PC-9 (cell line): ENCODE measurements at regions of chr17 and their contacts with region 1.

Region 1: GRCh38 chr17:35242805-35243560 is at the start of gene SLFN5:
- DNase-seq: peak; percentile 73 to 90
- H3K4me3 ChIP-seq: peak within 1 kb of the TSS; percentile 86
- H3K27ac ChIP-seq: peak within 1 kb of the TSS; percentile 99
- H3K4me1 ChIP-seq: peaks cover 29% of the 10 kb centered on the region
- H3K27me3 ChIP-seq: peaks cover 1% of the 10 kb centered on the region; the same call in 1 of the 2 replicates
- CTCF ChIP-seq: no peak
- total RNA-seq, gene SLFN5: 16.1 and 17.3 TPM in 2 replicates

Region 2: DNA sequence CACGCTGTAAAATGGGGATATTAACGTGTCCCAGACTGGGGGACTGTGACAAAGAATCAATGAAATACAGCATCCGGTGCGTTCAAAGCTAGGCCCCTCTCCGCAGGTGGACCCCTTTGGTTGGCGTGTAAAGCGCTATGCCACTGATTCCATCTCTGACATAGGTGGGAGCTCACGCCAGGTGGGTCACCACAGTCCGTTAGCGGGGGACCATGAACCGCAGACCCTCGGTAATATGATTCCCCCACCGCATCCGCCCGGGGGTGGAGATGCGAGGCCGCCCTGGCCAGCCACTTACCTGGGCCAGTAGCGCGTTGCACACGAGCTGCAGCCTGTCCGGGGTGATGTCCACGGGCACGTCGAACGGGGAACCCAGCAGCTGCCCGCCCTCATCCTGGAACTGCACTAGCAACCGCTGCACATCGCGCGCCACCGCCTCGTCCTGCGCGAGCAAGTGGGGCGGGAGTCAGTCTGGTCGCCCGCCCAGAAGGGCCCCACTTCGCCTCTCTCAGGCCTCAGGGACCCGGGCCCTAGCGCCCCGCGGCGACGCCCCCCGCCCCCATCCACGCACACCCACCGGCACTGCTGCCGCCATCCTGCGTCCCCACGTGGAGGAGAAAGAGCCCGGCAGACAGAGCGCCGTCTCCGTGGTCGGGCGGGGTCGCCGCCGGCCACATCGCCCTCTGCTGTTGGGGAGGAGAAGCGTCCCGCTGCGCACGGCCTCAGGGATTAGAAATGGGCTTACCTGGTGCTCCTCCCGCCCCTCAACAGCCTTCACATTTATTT is 101.1 kb before region 1 on chr17 and contains the start of gene NLE1:
- CTCF ChIA-PET with region 1: no interaction called
- POLR2A ChIA-PET with region 1: no interaction called
- intact Hi-C with region 1: loop called (anchors 5 kb)
- DNase-seq: peak; percentile 49 to 79
- H3K4me3 ChIP-seq: peak within 1 kb of the TSS; percentile 100
- H3K27ac ChIP-seq: no peak within 1 kb of the TSS
- H3K4me1 ChIP-seq: peaks cover 6% of the 10 kb centered on the region
- H3K27me3 ChIP-seq: peaks cover 10% of the 10 kb centered on the region; the same call in 1 of the 2 replicates
- CTCF ChIP-seq: peak; percentile 85
- total RNA-seq, gene NLE1: 16.4 and 20.8 TPM in 2 replicates

Region 3: GRCh38 chr17:35299129-35299528 is 56.1 kb after region 1 on chr17:
- CTCF ChIA-PET with region 1: no interaction called
- POLR2A ChIA-PET with region 1: no interaction called
- intact Hi-C with region 1: loop called (anchors 2 kb)
- DNase-seq: peak; percentile 62 to 72
- H3K4me3 ChIP-seq: no peak overlapping the region
- H3K27ac ChIP-seq: no peak overlapping the region
- H3K4me1 ChIP-seq: peaks cover 15% of the 10 kb centered on the region
- H3K27me3 ChIP-seq: no peaks in the 10 kb centered on the region
- CTCF ChIP-seq: no peak

Region 4: DNA sequence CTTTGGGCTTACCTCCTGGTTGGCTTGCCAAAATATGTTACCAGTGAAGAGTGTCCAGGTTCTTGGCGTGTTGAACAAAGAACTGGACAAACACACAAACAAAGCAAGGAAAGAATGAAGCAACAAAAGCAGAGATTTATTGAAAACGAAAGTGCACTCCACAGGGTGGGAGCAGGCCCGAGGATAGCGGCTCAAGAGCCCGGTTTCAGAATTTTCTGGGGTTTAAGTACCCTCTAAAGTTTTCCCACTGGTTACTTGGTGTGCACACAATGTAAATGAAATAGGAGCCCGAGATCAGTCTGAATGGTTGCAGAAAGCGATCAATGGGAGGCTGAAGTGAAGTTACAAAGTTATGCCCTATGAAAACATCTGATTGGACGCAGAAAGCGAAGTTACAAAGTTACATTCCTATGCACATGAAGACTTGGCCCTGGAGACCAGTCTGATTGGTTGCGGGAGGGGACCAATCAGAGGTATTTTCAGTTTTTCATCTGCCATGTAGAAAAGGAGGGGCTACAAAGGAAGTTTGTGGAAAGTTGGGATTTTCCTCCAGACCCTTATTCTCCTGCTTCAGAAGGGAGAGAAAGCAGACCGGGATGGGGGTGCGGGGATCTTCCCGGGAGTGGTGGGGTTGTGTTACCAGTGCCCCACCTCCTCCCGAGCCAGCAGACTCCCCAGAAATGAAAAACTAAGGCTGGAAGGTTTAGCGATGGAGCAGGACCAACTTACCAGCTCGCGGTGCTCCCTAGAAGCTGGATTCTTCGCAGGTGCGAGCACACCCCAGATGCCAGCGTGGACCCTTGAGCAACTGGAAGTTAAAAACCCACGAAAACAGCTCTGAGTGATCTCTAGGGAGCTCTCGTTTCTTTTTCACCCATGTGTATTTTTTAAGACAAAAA is 189.4 kb after region 1 on chr17 and contains the start of gene SLFN12:
- CTCF ChIA-PET with region 1: no interaction called
- POLR2A ChIA-PET with region 1: interaction called, 4 read pairs
- intact Hi-C with region 1: loop called (anchors 2 kb)
- DNase-seq: peak; percentile 58 to 83
- H3K4me3 ChIP-seq: peak within 1 kb of the TSS; percentile 57
- H3K27ac ChIP-seq: peak within 1 kb of the TSS; percentile 44; the same call in 1 of the 2 replicates
- H3K4me1 ChIP-seq: peaks cover 18% of the 10 kb centered on the region
- H3K27me3 ChIP-seq: no peaks in the 10 kb centered on the region
- CTCF ChIP-seq: no peak
- total RNA-seq, gene SLFN12: 9.7 and 14.3 TPM in 2 replicates

Region 5: DNA sequence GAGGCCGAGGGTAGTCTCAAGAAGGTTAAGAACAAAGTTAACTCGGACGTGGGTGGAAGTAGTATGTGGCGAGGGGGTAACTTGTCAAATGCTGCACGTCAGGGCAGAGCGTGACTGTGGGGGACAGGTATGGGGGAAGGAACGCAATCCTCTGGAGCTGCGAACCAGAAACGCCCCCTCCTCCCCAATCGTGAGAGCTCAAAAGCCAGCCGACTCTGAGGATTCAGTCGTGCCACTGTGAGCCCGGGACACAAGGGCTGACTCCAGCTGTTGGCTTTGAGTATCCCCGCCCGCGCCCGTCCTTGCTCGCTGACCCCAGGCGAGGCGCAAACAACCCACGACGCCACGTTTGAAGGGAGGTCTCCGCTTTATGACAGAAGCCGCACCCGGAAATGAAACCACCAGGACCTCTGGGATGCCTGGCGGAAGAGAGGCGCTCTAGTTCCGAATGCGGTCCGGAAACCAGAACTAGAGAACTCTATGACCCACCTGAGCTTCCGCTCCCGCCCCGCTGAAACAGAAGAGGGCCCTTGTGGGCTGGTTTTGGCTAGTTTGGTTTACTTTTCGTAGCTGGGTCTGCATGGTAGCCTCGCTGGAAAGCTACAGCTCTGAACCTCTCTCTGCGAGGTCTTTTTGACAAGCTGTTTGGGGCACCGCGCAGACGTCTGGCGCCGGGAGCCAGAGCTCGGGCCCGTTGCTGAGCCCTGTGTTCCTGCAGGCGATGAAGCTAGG is 335.4 kb after region 1 on chr17 and contains the start of gene PEX12:
- CTCF ChIA-PET with region 1: no interaction called
- POLR2A ChIA-PET with region 1: no interaction called
- intact Hi-C with region 1: loop called (anchors 2 kb)
- DNase-seq: peak; percentile 61 to 73
- H3K4me3 ChIP-seq: peak within 1 kb of the TSS; percentile 67
- H3K27ac ChIP-seq: peak within 1 kb of the TSS; percentile 45; the same call in 1 of the 2 replicates
- H3K4me1 ChIP-seq: peaks cover 15% of the 10 kb centered on the region
- H3K27me3 ChIP-seq: no peaks in the 10 kb centered on the region
- CTCF ChIP-seq: no peak
- total RNA-seq, gene PEX12: 4.7 and 5.8 TPM in 2 replicates

Region 6: GRCh38 chr17:35684055-35684802 is 441.2 kb after region 1 on chr17:
- CTCF ChIA-PET with region 1: no interaction called
- POLR2A ChIA-PET with region 1: no interaction called
- intact Hi-C with region 1: no loop called
- DNase-seq: no peak
- H3K4me3 ChIP-seq: no peak overlapping the region
- H3K27ac ChIP-seq: no peak overlapping the region
- H3K4me1 ChIP-seq: no peaks in the 10 kb centered on the region
- H3K27me3 ChIP-seq: no peaks in the 10 kb centered on the region
- CTCF ChIP-seq: no peak